Breast epithelium (tissue), 4 donors: ENCODE measurements at regions of chr2 and their contacts with region 1.

Region 1: DNA sequence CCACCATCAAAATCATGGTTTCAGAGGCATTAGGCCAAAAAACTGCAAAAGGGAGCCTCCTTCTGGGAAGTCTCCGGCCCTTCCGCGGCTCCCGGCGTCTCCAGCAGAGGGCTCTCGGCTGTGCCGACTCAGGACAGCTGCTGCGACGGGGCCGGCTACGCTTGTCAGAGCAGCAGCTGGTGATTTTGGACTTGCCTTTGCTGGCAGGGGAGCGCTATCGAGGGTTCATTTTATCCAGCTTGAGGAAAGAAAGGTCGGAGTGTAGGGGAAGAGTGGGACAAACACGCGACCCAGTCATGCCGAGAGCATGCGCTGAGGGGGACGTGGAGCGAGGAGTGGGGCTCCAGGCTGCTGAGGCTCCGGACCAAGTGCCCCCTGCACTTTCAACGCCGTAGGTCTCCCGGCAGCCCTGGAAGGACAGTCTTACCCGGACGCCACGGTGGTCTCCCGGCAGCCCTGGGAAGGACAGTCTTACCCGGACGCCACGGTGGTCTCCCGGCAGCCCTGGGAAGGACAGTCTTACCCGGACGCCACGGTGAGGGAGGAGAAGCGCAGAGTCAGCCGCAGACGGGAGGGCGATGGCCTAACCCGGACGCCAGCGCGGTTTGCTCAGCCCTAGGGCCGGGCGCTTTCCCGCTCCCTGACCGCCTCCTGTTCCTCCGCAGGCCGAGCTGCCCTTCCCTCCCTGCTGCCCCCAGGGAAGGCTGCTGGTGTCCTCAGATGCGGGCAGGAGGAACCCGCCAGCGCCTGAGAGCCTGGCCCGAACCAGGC is 21.7 kb downstream of the DDX18 start:
- DNase-seq: peak; percentile 49 to 78
- H3K4me3 ChIP-seq: peak overlapping the region; percentile 45 to 69 (median 51)
- H3K27ac ChIP-seq: peak overlapping the region; percentile 13 to 36
- H3K4me1 ChIP-seq: no peaks in the 10 kb centered on the region
- H3K27me3 ChIP-seq: no peaks in the 10 kb centered on the region
- CTCF ChIP-seq: peak in 2 of 3 donors; percentile 45 to 71
- POLR2A ChIP-seq: no peak

Region 2: GRCh38 chr2:118003396-118003824 is 167.2 kb after region 1 on chr2:
- intact Hi-C with region 1: loop called (anchors 10 kb)
- DNase-seq: no peak
- H3K4me3 ChIP-seq: no peak overlapping the region
- H3K27ac ChIP-seq: no peak overlapping the region
- H3K4me1 ChIP-seq: no peaks in the 10 kb centered on the region
- H3K27me3 ChIP-seq: no peaks in the 10 kb centered on the region
- CTCF ChIP-seq: peak; percentile 55 to 70 (median 69)
- POLR2A ChIP-seq: no peak

Region 3: GRCh38 chr2:118300832-118301231 is 464.7 kb after region 1 on chr2:
- intact Hi-C with region 1: no loop called
- DNase-seq: no peak
- H3K4me3 ChIP-seq: no peak overlapping the region
- H3K27ac ChIP-seq: no peak overlapping the region
- H3K4me1 ChIP-seq: no peaks in the 10 kb centered on the region
- H3K27me3 ChIP-seq: peaks cover 0 to 5% of the 10 kb centered on the region in 2 donors
- CTCF ChIP-seq: no peak
- POLR2A ChIP-seq: no peak